ENCODE measurements at regions of chr3 and their contacts with region 1.

Region 1: GRCh38 chr3:148861277-148861869 is 3.7 kb upstream of the CPA3 start:
- DNase-seq: peak; percentile 60
- H3K4me3 ChIP-seq: no peak overlapping the region
- H3K27ac ChIP-seq: no peak overlapping the region
- H3K4me1 ChIP-seq: no peaks in the 10 kb centered on the region
- H3K27me3 ChIP-seq: peaks cover 18 to 28% of the 10 kb centered on the region in 2 experiments
- CTCF ChIP-seq: peak; percentile 30 to 46
- POLR2A ChIP-seq: no peak

Region 2: GRCh38 chr3:148948913-148949657 is 87.7 kb after region 1 on chr3:
- CTCF ChIA-PET with region 1: interaction called, 181 read pairs
- POLR2A ChIA-PET with region 1: no interaction called
- dilution Hi-C with region 1: no loop called
- intact Hi-C with region 1: loop called (anchors 1 kb)
- DNase-seq: no peak
- H3K4me3 ChIP-seq: no peak overlapping the region
- H3K27ac ChIP-seq: no peak overlapping the region
- H3K4me1 ChIP-seq: no peaks in the 10 kb centered on the region
- H3K27me3 ChIP-seq: no peaks in the 10 kb centered on the region
- CTCF ChIP-seq: no peak
- POLR2A ChIP-seq: no peak